GM10248 (cell line): ENCODE measurements at regions of chr2 and their contacts with region 1.

Region 1: DNA sequence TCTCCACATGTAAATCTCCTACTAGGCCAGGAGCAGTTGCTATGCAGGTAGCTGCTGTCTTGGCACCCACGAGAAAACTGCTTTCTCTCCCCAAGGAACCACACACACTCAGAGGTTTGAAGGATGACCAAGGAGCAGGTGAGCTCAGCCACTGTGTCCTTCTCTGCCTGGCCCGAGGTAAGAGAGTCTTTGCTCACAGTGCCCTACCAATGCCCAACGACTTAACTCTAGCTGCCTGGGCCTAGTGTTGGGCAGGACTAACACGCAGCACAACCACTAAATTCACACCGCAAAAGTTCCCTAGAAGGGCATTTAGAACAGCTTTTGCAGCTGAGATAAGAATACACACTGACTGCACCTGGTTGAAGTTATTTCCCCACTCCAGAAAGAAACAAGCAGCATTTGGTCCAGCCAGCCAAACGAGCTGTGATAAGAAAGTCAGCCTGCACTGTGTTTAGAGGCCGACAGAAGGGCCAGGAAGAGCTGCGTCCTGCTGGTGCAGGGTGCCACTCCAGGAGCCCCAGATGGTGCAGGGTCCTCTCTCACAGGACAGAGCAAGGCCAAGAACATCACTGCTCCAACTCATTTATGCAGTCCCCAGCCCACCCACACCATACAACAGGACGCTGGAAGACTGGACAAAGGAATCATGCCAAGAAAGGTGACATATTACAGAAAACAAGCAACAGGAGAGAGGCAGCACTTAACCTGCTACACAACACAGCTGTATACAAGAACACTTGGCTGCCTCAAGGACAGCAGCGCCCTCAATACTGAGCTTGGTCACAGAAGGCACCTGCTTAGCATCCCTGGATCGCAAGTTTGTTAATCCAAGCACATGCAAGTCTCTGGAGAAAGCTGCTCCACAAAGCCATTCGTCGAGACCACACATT is 12.5 kb downstream of the HDLBP start:
- DNase-seq: no peak
- CTCF ChIP-seq: no peak

Region 2: DNA sequence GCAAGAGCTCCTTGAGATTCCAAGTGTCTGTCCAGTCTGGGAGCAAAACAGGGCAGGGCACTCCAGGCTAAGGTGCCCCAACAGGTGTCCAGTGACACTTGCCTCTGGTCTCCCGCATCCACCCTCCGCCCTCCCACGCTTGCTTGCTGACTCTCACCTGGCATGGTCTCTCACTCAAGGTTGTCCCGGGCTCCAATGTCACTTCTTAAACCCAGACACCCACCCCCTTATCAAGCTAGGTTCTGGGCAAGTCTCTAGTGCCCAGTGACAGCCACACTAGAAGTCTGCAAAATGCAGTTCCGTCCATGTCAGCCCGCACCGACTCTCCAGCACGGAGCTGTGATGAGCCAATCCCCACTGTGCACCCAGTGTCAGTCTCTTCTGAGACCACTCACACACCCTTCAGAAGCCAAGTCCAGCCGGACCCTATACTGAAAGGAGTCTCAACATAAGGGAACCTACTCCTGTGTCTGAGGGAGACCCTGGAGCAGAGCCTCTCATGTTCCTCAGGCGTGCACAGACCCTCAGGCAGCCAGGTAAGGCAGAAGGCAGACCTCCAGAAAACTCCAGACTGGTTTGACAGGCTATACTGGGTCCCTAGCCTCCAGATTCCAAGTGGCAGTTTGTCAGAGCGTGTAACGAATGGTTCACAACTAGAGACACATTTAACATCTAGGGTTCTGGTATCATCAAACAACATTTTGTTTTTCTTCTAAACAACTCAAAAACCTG is 33.1 kb before region 1 on chr2:
- CTCF ChIA-PET with region 1: no interaction called
- POLR2A ChIA-PET with region 1: no interaction called
- DNase-seq: no peak
- CTCF ChIP-seq: no peak

Region 3: DNA sequence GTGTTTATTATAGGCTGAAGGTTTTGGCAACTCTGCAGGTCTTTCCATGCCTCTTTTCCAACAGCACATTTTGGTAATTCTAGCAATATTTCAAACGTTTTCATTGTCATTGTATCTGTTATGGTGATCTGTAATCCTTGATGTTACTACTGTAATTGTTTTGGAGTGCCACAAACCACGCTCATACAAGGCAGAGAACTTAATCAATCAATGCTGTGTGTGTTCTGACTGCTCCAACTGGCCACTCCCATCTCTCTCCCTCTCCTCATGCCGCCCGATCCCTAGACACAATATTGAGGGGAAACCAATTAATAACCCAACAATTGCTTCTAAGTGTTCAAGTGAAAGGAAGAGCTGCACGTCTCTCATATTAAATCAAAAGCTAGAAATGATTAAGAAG is 20.4 kb before region 1 on chr2:
- CTCF ChIA-PET with region 1: interaction called, 10 read pairs
- POLR2A ChIA-PET with region 1: interaction called, 3 read pairs
- DNase-seq: no peak
- CTCF ChIP-seq: no peak

Region 4: GRCh38 chr2:241289597-241289996 is 13.4 kb before region 1 on chr2:
- CTCF ChIA-PET with region 1: interaction called, 11 read pairs
- POLR2A ChIA-PET with region 1: no interaction called
- DNase-seq: no peak
- CTCF ChIP-seq: no peak

Region 5: GRCh38 chr2:241315093-241315878 is 12.3 kb after region 1 on chr2 and contains the start of gene HDLBP:
- CTCF ChIA-PET with region 1: interaction called, 13 read pairs
- POLR2A ChIA-PET with region 1: interaction called, 19 read pairs
- DNase-seq: peak; percentile 98
- CTCF ChIP-seq: peak; percentile 51